GM23248 (cell line): ENCODE measurements at regions of chrX and their contacts with region 1.

Region 1: DNA sequence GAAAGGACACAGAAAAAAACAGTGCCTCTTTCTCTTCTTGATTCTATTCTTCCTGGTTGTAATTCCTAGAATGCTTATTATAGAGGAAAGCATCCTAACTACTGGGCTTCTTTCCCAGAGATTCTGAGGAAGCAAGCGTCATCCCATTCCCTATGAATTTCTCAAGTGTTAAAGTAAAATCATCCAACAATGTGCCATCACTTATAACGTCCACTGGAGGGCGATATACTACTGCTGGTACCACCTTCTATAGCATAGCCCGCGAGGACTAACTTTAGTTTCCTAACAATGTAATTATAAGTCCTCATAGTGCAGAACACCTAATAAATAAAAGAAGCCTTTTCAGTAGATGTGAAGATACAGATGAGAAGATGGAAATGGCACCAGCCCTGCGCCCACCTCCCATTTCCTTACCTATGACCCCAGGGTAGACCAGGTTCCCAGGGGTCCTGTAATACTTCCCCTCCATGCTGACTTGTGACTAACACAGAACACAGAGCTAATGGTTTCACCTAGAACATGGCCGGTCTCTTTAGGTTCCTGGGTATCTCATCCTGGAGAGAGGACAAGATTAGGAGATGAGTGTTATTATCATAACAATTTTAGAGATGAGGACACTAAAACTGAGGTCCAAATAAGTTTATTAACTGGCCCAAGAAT is 4.2 kb downstream of the CENPVL3 start:
- DNase-seq: peak; percentile 76
- H3K4me3 ChIP-seq: no peak overlapping the region
- H3K27ac ChIP-seq: no peak overlapping the region
- H3K4me1 ChIP-seq: no peaks in the 10 kb centered on the region
- H3K27me3 ChIP-seq: peaks cover 11% of the 10 kb centered on the region

Region 2: DNA sequence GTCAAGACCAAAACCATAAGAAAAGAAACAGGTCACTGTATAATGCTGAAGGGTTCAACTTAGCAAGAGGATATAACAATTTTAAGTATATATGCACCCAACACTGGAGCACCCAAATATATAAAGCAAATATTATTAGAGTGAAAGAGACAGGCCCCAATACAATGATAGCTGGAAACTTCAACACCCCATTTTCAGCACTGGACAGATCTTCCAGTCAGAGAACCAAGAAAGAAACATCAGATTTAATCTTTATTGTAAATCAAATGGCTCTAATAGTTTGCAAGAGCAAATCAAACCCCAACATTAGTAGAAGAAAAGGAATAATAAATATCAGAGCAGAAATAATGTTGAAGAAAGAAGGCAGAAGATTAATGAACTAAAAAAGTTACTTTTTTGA is 606.5 kb after region 1 on chrX:
- in situ Hi-C with region 1: loop called (anchors 25 kb)
- DNase-seq: no peak
- H3K4me3 ChIP-seq: no peak overlapping the region
- H3K27ac ChIP-seq: no peak overlapping the region
- H3K4me1 ChIP-seq: no peaks in the 10 kb centered on the region
- H3K27me3 ChIP-seq: no peaks in the 10 kb centered on the region